ENCODE measurements at regions of chr1 and their contacts with region 1.

Region 1: GRCh38 chr1:192516776-192517297 is 58.7 kb upstream of the RGS1 start:
- DNase-seq: peak; percentile 63
- ATAC-seq: peak; percentile 97
- H3K4me3 Mint-ChIP-seq: peak overlapping the region; percentile 40
- H3K27ac Mint-ChIP-seq: peak overlapping the region; percentile 63
- H3K4me1 Mint-ChIP-seq: peaks cover 62% of the 10 kb centered on the region
- H3K27me3 Mint-ChIP-seq: no peaks in the 10 kb centered on the region

Region 2: DNA sequence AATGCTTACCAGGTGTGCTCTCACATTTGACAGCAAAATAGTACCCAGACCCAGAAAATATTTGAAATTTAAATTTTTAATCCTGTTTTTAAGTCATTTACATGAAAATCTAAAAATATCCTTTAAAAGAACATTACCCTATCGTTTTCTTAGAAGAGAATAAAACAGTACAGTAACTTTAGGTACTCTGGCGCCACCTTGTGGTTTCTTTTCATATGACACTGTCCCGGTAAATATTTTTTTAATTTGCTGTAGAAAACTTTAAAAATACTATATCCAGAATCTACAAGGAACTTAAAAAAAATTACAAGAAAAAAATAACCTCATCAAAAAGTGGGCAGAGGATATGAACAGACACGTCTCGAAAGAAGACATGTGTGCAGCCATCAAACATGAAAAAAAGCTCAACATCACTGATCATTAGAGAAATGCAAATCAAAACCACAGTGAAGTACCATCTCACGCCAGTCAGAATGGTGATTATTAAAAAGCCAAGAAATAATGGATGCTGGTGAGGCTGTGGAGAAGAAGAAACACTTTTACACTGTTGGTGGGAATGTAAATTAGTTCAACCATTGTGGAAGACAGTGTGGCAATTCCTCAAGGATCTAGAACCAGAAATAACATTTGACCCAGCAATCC is 70.9 kb before region 1 on chr1:
- CTCF ChIA-PET with region 1: no interaction called
- POLR2A ChIA-PET with region 1: no interaction called
- intact Hi-C with region 1: no loop called
- DNase-seq: peak; percentile 74
- ATAC-seq: no peak
- H3K4me3 Mint-ChIP-seq: no peak overlapping the region
- H3K27ac Mint-ChIP-seq: no peak overlapping the region
- H3K4me1 Mint-ChIP-seq: no peaks in the 10 kb centered on the region
- H3K27me3 Mint-ChIP-seq: peaks cover 9% of the 10 kb centered on the region

Region 3: DNA sequence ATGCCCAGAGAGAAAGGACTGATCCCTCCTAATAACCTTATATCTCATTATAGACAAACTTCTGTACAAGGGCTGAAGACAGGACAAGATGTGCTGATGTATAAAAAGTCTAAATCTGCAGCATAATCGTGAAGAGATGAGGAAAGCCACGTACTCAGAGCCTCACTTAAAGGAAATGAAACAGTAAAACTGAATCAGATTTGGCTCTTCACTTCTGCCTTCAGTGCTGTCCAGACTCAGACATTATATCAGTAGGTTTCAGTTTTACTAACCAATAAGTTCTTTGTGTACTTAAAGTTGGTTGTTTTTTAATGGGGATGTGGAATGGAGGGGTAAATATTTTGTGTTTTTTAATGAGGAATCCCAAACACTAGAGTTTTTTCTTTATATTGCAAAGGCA is 13.4 kb after region 1 on chr1:
- CTCF ChIA-PET with region 1: interaction called, 4 read pairs
- POLR2A ChIA-PET with region 1: no interaction called
- intact Hi-C with region 1: loop called (anchors 1 to 2 kb)
- DNase-seq: no peak
- ATAC-seq: peak; percentile 67
- H3K4me3 Mint-ChIP-seq: no peak overlapping the region
- H3K27ac Mint-ChIP-seq: no peak overlapping the region
- H3K4me1 Mint-ChIP-seq: peaks cover 20% of the 10 kb centered on the region
- H3K27me3 Mint-ChIP-seq: no peaks in the 10 kb centered on the region

Region 4: DNA sequence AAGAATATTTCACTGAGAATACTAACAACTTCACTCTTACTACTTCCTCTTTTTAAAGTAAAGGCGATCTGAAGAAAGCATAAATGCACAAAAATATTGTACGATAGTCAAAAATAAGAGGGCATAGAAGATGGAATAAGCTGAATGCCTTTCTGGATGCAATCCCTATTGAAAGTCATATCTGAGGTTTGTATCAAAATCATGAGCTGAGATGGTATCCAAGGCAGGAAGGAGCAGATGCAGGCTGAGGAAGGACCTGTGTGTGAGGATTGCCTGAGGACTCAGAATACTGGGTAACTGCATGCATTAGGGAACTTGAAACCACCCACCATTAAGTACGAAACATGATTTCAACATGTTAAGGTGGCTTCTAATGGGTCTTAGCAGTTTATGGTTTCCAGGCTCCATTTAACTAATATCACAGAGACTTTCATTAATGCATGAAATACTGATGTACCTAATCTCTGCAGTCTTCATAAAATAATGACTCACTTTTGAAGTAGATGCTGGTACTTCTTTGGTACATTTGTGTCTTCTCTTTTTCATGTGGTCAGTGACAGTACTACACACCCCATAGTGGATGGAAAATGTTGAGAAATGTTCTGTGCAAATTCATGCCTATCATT is 29.2 kb after region 1 on chr1:
- CTCF ChIA-PET with region 1: interaction called, 10 read pairs
- POLR2A ChIA-PET with region 1: no interaction called
- intact Hi-C with region 1: loop called (anchors 1 to 5 kb)
- DNase-seq: no peak
- ATAC-seq: no peak
- H3K4me3 Mint-ChIP-seq: no peak overlapping the region
- H3K27ac Mint-ChIP-seq: no peak overlapping the region
- H3K4me1 Mint-ChIP-seq: peaks cover 49% of the 10 kb centered on the region
- H3K27me3 Mint-ChIP-seq: no peaks in the 10 kb centered on the region

Region 5: DNA sequence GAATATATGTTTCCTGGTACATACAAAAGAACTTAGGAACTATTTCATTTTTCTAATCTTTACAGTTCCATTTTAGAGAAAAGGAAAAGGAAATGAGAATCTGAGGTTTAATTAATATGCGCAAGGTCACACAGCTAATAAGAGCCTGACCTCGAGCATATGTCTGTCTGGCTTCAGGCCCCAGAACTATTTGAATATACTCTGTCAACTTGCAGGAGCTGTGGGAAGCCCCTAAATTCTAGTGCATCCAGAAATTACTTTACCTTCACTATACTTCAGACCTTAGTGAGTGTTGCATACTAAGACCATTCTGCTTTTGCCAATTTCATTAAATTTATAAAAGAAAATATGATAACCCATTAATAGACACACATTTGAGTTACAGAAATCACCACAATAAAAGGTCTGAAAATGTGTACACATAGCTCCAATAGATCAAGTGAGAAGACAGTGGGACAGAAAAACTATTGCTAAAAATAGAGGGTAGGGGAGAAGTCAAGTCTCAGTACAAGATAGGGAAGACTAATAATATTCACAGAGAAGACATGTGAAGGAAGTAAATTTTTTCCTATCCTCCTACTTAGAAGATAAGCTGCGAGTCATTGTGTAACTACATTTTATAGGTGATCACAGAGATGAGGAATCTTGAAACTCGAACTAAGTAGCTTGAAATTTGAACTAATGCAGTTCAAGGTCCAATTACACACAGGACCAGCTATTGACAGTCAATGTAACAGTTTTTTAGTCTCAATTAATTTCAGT is 123.0 kb after region 1 on chr1:
- CTCF ChIA-PET with region 1: interaction called, 4 read pairs
- POLR2A ChIA-PET with region 1: no interaction called
- intact Hi-C with region 1: loop called in 1 of 2 experiments (anchors 2 kb)
- DNase-seq: no peak
- ATAC-seq: peak; percentile 92
- H3K4me3 Mint-ChIP-seq: no peak overlapping the region
- H3K27ac Mint-ChIP-seq: peak overlapping the region; percentile 71
- H3K4me1 Mint-ChIP-seq: peaks cover 20% of the 10 kb centered on the region
- H3K27me3 Mint-ChIP-seq: peaks cover 3% of the 10 kb centered on the region

Measured in activated CD4-positive, alpha-beta T cell treated with anti-CD3 and anti-CD28 coated beads for 36 hours (primary cell).